ENCODE measurements at regions of chr7 and their contacts with region 1.

Region 1: GRCh38 chr7:92567460-92567859 is 22.7 kb downstream of the FAM133B start:
- DNase-seq: no peak
- ATAC-seq: no peak
- H3K4me3 Mint-ChIP-seq: no peak overlapping the region
- H3K27ac Mint-ChIP-seq: no peak overlapping the region
- H3K4me1 Mint-ChIP-seq: no peaks in the 10 kb centered on the region
- H3K27me3 Mint-ChIP-seq: no peaks in the 10 kb centered on the region
- CTCF ChIP-seq: no peak

Region 2: GRCh38 chr7:92557249-92557648 is 10.2 kb before region 1 on chr7:
- CTCF ChIA-PET with region 1: no interaction called
- POLR2A ChIA-PET with region 1: interaction called, 10 read pairs
- intact Hi-C with region 1: no loop called
- DNase-seq: no peak
- ATAC-seq: peak; percentile 27
- H3K4me3 Mint-ChIP-seq: no peak overlapping the region
- H3K27ac Mint-ChIP-seq: no peak overlapping the region
- H3K4me1 Mint-ChIP-seq: no peaks in the 10 kb centered on the region
- H3K27me3 Mint-ChIP-seq: no peaks in the 10 kb centered on the region
- CTCF ChIP-seq: no peak

Measured in activated CD8-positive, alpha-beta T cell treated with anti-CD3 and anti-CD28 coated beads for 36 hours (primary cell).